Ovary (tissue), 10 donors: ENCODE measurements at regions of chr2 and their contacts with region 1.

Region 1: DNA sequence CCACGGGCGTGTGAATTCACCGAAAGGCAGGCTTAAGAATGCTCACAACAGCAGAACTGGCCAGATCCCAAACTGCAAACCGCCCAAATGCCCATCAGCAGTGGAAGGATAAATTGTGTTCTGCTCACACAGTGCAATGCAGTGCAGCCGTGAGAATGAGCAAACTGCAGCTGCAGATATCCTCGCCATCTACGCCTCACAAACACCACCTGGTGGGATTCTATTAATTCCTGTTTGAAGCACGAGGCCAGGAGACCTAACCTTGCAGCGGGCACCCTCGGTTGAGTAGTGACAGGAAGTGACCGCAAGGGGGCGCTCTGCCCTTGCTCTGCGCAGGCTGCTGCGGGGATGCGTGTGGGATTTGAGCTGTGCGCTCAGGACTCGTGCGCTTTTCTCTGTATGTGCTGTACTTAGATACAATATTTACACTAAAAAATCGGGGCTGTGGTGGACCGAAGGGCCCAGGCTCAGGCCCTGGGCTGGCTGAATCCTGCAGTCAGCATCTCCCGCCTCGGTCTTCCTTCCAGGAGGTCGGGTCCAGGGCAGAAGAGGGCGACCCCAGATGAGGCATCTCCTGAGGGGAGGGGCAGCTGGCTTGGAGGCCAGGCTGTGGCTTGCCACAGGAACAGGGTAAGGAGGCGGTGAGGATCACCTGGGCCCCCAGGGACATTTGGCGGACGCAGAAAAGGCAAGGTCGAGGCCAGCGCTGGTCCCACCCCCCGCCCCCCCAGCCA is 19.8 kb upstream of the PDIA6 start:
- DNase-seq: peak; percentile 68 to 88 (median 82)
- H3K4me3 ChIP-seq: no peak overlapping the region
- H3K27ac ChIP-seq: no peak overlapping the region
- H3K4me1 ChIP-seq: peaks cover 2% of the 10 kb centered on the region
- H3K27me3 ChIP-seq: no peaks in the 10 kb centered on the region
- CTCF ChIP-seq: peak; percentile 77 to 96 (median 83)
- EP300 ChIP-seq: no peak
- POLR2A ChIP-seq: no peak

Region 2: DNA sequence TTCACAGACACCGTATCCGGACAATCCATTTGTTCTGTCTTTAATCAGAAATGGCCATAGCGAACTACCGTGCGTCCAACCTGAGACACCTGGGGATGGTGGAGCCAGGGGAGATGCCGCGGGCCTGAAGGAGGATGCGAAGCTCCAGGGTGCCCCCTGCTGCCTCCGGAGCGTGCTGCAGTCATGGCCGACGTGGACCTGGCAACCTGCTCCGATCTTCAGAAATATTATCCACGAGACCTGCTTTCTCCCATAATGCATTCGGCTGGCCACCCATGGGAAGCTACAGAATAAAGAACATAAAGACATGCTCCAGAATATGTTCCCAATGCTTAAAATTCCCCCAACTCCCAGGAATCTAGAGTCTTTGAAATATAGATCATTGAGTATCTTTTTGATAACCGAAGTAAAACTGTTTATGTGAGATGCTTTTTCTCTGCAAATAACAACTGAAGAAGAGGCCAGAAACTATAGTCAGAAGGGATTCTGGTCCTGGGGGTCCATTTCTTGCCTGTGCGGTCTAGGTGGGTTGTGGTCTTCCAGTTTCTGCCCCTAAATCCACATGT is 292.2 kb after region 1 on chr2:
- intact Hi-C with region 1: loop called (anchors 2 to 10 kb)
- DNase-seq: peak in 2 of 5 donors; percentile 67 to 76
- H3K4me3 ChIP-seq: no peak overlapping the region
- H3K27ac ChIP-seq: no peak overlapping the region
- H3K4me1 ChIP-seq: no peaks in the 10 kb centered on the region
- H3K27me3 ChIP-seq: no peaks in the 10 kb centered on the region
- CTCF ChIP-seq: no peak
- EP300 ChIP-seq: no peak
- POLR2A ChIP-seq: no peak

Region 3: DNA sequence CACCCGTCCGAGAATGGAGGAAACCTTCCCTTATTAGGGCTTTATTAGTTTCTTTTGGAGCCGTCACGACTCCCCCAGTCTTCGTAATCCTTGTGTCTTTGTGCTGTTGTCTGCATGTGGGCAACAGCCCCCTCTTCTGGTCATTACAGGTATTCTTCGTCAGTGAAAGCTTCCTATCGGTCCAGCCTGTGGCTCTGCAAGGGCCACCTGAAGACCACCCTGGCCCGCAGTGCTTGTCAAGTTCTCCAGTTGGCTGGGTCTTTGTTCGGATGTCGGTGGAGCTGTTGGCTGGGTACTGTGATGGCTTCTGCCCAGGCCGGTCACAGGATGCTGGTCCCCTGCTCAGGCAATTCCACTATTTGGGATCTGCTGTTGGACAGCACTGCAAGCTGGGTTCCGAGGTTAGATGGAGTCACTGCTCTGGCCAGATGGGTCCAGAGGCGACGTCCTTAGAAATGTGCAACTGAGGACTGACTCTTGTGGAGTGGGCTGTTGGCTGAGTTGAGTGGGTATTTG is 614.4 kb after region 1 on chr2:
- intact Hi-C with region 1: loop called in 1 of 4 experiments (anchors 10 kb)
- DNase-seq: peak; percentile 50 to 74 (median 52)
- H3K4me3 ChIP-seq: no peak overlapping the region
- H3K27ac ChIP-seq: no peak overlapping the region
- H3K4me1 ChIP-seq: no peaks in the 10 kb centered on the region
- H3K27me3 ChIP-seq: no peaks in the 10 kb centered on the region
- CTCF ChIP-seq: peak; percentile 68 to 82 (median 79)
- EP300 ChIP-seq: no peak
- POLR2A ChIP-seq: no peak